Ovary (tissue), 10 donors: ENCODE measurements at regions of chr15 and their contacts with region 1.

Region 1: GRCh38 chr15:22949074-22949547 is 31.1 kb downstream of the CYFIP1 start:
- DNase-seq: peak; percentile 43 to 83 (median 66)
- H3K4me3 ChIP-seq: no peak overlapping the region
- H3K27ac ChIP-seq: peak overlapping the region in 1 of 2 donors; percentile 62
- H3K4me1 ChIP-seq: peaks cover 24% of the 10 kb centered on the region
- H3K27me3 ChIP-seq: no peaks in the 10 kb centered on the region
- CTCF ChIP-seq: no peak
- EP300 ChIP-seq: no peak
- POLR2A ChIP-seq: no peak

Region 2: GRCh38 chr15:22888120-22888859 is 60.8 kb before region 1 on chr15:
- intact Hi-C with region 1: loop called in 1 of 4 experiments (anchors 10 kb)
- DNase-seq: no peak
- H3K4me3 ChIP-seq: no peak overlapping the region
- H3K27ac ChIP-seq: no peak overlapping the region
- H3K4me1 ChIP-seq: no peaks in the 10 kb centered on the region
- H3K27me3 ChIP-seq: no peaks in the 10 kb centered on the region
- CTCF ChIP-seq: no peak
- EP300 ChIP-seq: no peak
- POLR2A ChIP-seq: no peak

Region 3: DNA sequence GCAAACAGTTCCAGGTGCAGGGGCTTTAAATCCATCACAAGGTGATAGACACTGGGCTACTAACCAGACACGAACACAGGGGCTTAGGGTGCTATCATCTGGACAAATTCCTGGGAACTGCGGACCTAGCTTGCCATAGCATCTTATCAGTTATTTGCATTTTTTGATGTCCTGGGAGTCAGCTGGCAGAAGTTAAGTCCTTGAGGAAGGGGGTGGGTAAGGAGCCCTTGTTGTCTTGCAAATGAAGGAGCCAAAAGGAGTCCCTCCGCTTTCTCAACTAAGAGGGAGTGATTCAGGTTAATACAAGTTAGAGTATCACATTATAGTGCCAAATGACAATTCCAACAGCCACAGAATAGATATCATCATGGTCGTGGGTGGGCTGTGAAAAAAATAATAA is 1835.4 kb after region 1 on chr15:
- intact Hi-C with region 1: no loop called
- DNase-seq: no peak
- H3K4me3 ChIP-seq: no peak overlapping the region
- H3K27ac ChIP-seq: no peak overlapping the region
- H3K4me1 ChIP-seq: no peaks in the 10 kb centered on the region
- H3K27me3 ChIP-seq: no peaks in the 10 kb centered on the region
- CTCF ChIP-seq: no peak
- EP300 ChIP-seq: no peak
- POLR2A ChIP-seq: no peak